AG04450 (cell line): ENCODE measurements at regions of chr11 and their contacts with region 1.

Region 1: GRCh38 chr11:77198440-77198849 is 70.4 kb downstream of the MYO7A start:
- DNase-seq: no peak
- H3K4me3 ChIP-seq: no peak overlapping the region
- H3K27ac ChIP-seq: no peak overlapping the region
- H3K27me3 ChIP-seq: no peaks in the 10 kb centered on the region
- CTCF ChIP-seq: peak; percentile 44

Region 2: GRCh38 chr11:77187776-77188632 is 10.4 kb before region 1 on chr11:
- CTCF ChIA-PET with region 1: interaction called, 13 read pairs
- POLR2A ChIA-PET with region 1: no interaction called
- DNase-seq: peak; percentile 53
- H3K4me3 ChIP-seq: no peak overlapping the region
- H3K27ac ChIP-seq: no peak overlapping the region
- H3K27me3 ChIP-seq: peaks cover 17% of the 10 kb centered on the region
- CTCF ChIP-seq: peak; percentile 95